CD8-positive, alpha-beta T cell (primary cell): ENCODE measurements at regions of chr11 and their contacts with region 1.

Region 1: GRCh38 chr11:48109046-48109666 is 107.5 kb upstream of the OR4B1 start:
- DNase-seq: peak in 3 of 9 experiments; percentile 31 to 66 (median 48)
- ATAC-seq: peak; percentile 42
- H3K4me3 ChIP-seq: peak overlapping the region; percentile 40 to 49
- H3K4me3 Mint-ChIP-seq: peak overlapping the region; percentile 75
- H3K27ac ChIP-seq: peak overlapping the region; percentile 33 to 68
- H3K27ac Mint-ChIP-seq: peak overlapping the region; percentile 79
- H3K4me1 ChIP-seq: peaks cover 17% of the 10 kb centered on the region
- H3K4me1 Mint-ChIP-seq: peaks cover 38% of the 10 kb centered on the region
- H3K27me3 ChIP-seq: no peaks in the 10 kb centered on the region
- H3K27me3 Mint-ChIP-seq: no peaks in the 10 kb centered on the region
- CTCF ChIP-seq: peak; percentile 10

Region 2: DNA sequence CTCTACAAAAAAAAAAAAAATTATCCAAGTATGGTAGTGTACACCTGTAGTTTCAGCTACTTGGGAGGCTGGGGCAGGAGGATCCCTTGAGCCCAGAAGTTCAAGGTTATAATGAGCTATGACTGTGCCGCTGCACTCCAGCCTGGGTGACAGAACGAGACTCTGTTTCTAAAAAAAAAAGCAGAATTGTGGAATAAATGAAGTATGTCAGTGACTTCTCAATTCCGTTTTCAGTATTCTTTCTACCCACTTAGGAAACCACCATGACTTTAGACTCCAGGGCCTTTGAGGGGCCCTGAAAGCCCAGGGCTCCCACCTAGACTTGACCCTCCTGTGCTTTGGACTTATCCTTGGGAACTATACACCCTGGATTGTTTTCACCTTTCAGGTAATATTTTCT is 254.5 kb before region 1 on chr11:
- CTCF ChIA-PET with region 1: interaction called, 4 read pairs
- POLR2A ChIA-PET with region 1: no interaction called
- intact Hi-C with region 1: loop called (anchors 1 to 2 kb)
- DNase-seq: no peak
- ATAC-seq: no peak
- H3K4me3 ChIP-seq: no peak overlapping the region
- H3K4me3 Mint-ChIP-seq: no peak overlapping the region
- H3K27ac ChIP-seq: no peak overlapping the region
- H3K27ac Mint-ChIP-seq: no peak overlapping the region
- H3K4me1 ChIP-seq: peaks cover 16% of the 10 kb centered on the region
- H3K4me1 Mint-ChIP-seq: peaks cover 24% of the 10 kb centered on the region
- H3K27me3 ChIP-seq: no peaks in the 10 kb centered on the region
- H3K27me3 Mint-ChIP-seq: no peaks in the 10 kb centered on the region
- CTCF ChIP-seq: no peak

Region 3: GRCh38 chr11:47946682-47947575 is 162.2 kb before region 1 on chr11:
- CTCF ChIA-PET with region 1: interaction called, 340 read pairs
- POLR2A ChIA-PET with region 1: no interaction called
- intact Hi-C with region 1: no loop called
- DNase-seq: peak in 2 of 9 experiments; percentile 17 to 33
- ATAC-seq: no peak
- H3K4me3 ChIP-seq: no peak overlapping the region
- H3K4me3 Mint-ChIP-seq: no peak overlapping the region
- H3K27ac ChIP-seq: no peak overlapping the region
- H3K27ac Mint-ChIP-seq: no peak overlapping the region
- H3K4me1 ChIP-seq: peaks cover 22% of the 10 kb centered on the region
- H3K4me1 Mint-ChIP-seq: peaks cover 30% of the 10 kb centered on the region
- H3K27me3 ChIP-seq: no peaks in the 10 kb centered on the region
- H3K27me3 Mint-ChIP-seq: no peaks in the 10 kb centered on the region
- CTCF ChIP-seq: no peak

Region 4: DNA sequence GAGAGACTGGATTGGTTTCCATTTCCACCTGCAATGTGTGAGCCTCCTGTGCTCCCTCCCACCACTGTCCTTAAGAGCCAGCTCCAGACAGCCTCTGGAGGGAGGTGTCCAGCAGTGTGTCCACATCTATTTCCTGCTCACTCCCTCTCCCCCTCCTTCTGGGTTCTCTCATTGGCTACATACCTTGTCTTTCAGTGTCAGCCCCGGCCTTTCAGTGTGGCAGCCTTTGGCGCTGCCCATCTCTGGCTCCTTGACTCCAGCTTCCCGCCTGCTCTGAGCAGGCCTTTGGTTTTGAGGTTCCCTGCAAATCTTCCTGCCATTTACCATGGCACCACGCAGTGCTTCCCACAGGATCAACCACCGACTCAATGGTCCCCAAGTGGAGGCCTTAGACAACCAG is 147.8 kb before region 1 on chr11:
- CTCF ChIA-PET with region 1: interaction called, 25 read pairs
- POLR2A ChIA-PET with region 1: no interaction called
- intact Hi-C with region 1: loop called in 1 of 2 experiments (anchors 1 kb)
- DNase-seq: no peak
- ATAC-seq: no peak
- H3K4me3 ChIP-seq: no peak overlapping the region
- H3K4me3 Mint-ChIP-seq: no peak overlapping the region
- H3K27ac ChIP-seq: no peak overlapping the region
- H3K27ac Mint-ChIP-seq: no peak overlapping the region
- H3K4me1 ChIP-seq: no peaks in the 10 kb centered on the region
- H3K4me1 Mint-ChIP-seq: no peaks in the 10 kb centered on the region
- H3K27me3 ChIP-seq: no peaks in the 10 kb centered on the region
- H3K27me3 Mint-ChIP-seq: no peaks in the 10 kb centered on the region
- CTCF ChIP-seq: no peak

Region 5: GRCh38 chr11:48020092-48020755 is 88.9 kb before region 1 on chr11:
- CTCF ChIA-PET with region 1: no interaction called
- POLR2A ChIA-PET with region 1: no interaction called
- intact Hi-C with region 1: loop called in 1 of 2 experiments (anchors 5 kb)
- DNase-seq: peak in 2 of 9 experiments; percentile 75 to 83
- ATAC-seq: peak; percentile 32
- H3K4me3 ChIP-seq: no peak overlapping the region
- H3K4me3 Mint-ChIP-seq: peak overlapping the region; percentile 22
- H3K27ac ChIP-seq: peak overlapping the region in 1 of 2 experiments; percentile 91
- H3K27ac Mint-ChIP-seq: peak overlapping the region; percentile 80
- H3K4me1 ChIP-seq: peaks cover 50% of the 10 kb centered on the region
- H3K4me1 Mint-ChIP-seq: peaks cover 62% of the 10 kb centered on the region
- H3K27me3 ChIP-seq: no peaks in the 10 kb centered on the region
- H3K27me3 Mint-ChIP-seq: no peaks in the 10 kb centered on the region
- CTCF ChIP-seq: no peak

Region 6: GRCh38 chr11:48055292-48056132 is 53.6 kb before region 1 on chr11:
- CTCF ChIA-PET with region 1: interaction called, 32 read pairs
- POLR2A ChIA-PET with region 1: interaction called, 5 read pairs
- intact Hi-C with region 1: loop called in 1 of 2 experiments (anchors 5 kb)
- DNase-seq: peak in 8 of 9 experiments; percentile 36 to 80 (median 58)
- ATAC-seq: peak; percentile 76
- H3K4me3 ChIP-seq: peak overlapping the region; percentile 0 to 36
- H3K4me3 Mint-ChIP-seq: peak overlapping the region; percentile 72
- H3K27ac ChIP-seq: peak overlapping the region; percentile 13 to 38
- H3K27ac Mint-ChIP-seq: peak overlapping the region; percentile 87
- H3K4me1 ChIP-seq: peaks cover 69% of the 10 kb centered on the region
- H3K4me1 Mint-ChIP-seq: peaks cover 80% of the 10 kb centered on the region
- H3K27me3 ChIP-seq: no peaks in the 10 kb centered on the region
- H3K27me3 Mint-ChIP-seq: no peaks in the 10 kb centered on the region
- CTCF ChIP-seq: no peak

Region 7: DNA sequence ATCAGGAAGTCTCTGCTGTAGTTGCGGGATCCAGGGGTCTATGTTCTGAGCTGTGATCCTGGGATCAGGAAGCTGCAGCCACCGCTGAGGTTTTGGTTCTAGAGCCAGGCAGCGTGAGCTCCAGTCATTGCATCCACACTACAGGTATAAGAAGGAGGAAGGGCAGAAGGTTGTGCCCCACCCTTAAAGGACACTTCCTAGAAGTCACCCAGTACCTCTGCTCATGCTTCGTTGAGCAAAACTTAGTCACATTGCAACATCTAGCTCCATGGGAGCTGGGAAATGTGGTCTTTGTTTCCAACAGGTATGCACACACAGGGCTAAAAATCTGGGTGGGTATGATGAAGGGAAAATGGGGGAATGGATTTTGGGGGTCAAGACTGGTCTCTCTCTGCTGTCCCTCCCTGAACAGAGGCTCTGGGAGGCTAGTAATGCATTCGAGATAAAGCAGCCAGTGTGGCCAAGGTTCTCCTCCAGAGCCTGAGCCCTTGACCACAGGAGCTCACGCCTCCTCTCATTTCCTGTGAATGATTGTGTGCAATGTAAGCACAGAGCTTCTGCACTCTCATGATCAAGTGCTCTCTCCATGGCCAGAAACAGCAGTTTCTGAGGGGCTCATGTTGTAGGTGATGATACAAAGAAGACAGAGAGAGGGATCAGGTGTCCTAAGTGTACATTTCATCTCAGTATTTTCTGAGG is 20.7 kb after region 1 on chr11:
- CTCF ChIA-PET with region 1: no interaction called
- POLR2A ChIA-PET with region 1: no interaction called
- intact Hi-C with region 1: no loop called
- DNase-seq: no peak
- ATAC-seq: no peak
- H3K4me3 ChIP-seq: no peak overlapping the region
- H3K4me3 Mint-ChIP-seq: no peak overlapping the region
- H3K27ac ChIP-seq: no peak overlapping the region
- H3K27ac Mint-ChIP-seq: peak overlapping the region; percentile 28
- H3K4me1 ChIP-seq: no peaks in the 10 kb centered on the region
- H3K4me1 Mint-ChIP-seq: no peaks in the 10 kb centered on the region
- H3K27me3 ChIP-seq: no peaks in the 10 kb centered on the region
- H3K27me3 Mint-ChIP-seq: no peaks in the 10 kb centered on the region
- CTCF ChIP-seq: no peak

Region 8: DNA sequence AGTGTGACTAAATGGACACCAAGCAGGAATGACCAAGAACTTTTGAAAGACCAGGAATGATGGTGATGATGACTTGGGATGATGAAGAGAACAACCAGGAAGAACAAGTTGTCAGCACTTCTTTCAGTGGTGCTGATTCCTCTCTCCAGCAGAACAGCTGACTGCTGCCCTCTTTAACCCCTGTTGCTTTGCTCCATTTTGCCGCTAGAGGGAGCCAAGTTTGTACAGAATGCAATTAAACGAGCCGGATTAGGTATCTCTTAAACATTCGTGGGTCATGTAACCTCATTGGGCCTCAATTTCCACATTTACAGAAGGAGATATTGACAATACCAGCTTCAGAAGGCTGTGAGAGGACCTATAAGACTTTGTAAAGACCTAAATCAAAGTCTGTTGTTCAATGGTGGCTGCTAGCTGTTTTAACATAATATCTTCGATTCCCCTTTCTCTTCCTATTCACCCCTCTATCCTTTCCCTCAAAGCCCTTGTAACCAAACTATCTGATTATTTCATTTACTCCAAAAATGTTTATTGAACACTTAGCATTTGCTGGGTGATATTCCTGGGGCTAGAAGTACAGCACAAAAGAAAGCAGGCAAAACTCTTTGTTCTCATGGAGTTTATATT is 198.7 kb after region 1 on chr11:
- CTCF ChIA-PET with region 1: no interaction called
- POLR2A ChIA-PET with region 1: no interaction called
- intact Hi-C with region 1: loop called in 1 of 2 experiments (anchors 5 kb)
- DNase-seq: peak; percentile 40 to 71 (median 51)
- ATAC-seq: no peak
- H3K4me3 ChIP-seq: no peak overlapping the region
- H3K4me3 Mint-ChIP-seq: no peak overlapping the region
- H3K27ac ChIP-seq: no peak overlapping the region
- H3K27ac Mint-ChIP-seq: no peak overlapping the region
- H3K4me1 ChIP-seq: no peaks in the 10 kb centered on the region
- H3K4me1 Mint-ChIP-seq: peaks cover 4% of the 10 kb centered on the region
- H3K27me3 ChIP-seq: no peaks in the 10 kb centered on the region
- H3K27me3 Mint-ChIP-seq: peaks cover 34% of the 10 kb centered on the region
- CTCF ChIP-seq: peak; percentile 75